ENCODE measurements at regions of chr11 and their contacts with region 1.

Region 1: GRCh38 chr11:59053387-59053786 is 32.7 kb upstream of the GLYATL1B start:
- DNase-seq: peak; percentile 59
- H3K4me3 ChIP-seq: no peak overlapping the region
- H3K27ac ChIP-seq: no peak overlapping the region
- H3K4me1 ChIP-seq: no peaks in the 10 kb centered on the region
- H3K27me3 ChIP-seq: peaks cover 2 to 4% of the 10 kb centered on the region in 2 experiments
- CTCF ChIP-seq: peak; percentile 69 to 74
- POLR2A ChIP-seq: no peak

Region 2: GRCh38 chr11:58301576-58301975 is 751.8 kb before region 1 on chr11:
- CTCF ChIA-PET with region 1: no interaction called
- POLR2A ChIA-PET with region 1: no interaction called
- dilution Hi-C with region 1: no loop called
- intact Hi-C with region 1: no loop called
- DNase-seq: no peak
- H3K4me3 ChIP-seq: no peak overlapping the region
- H3K27ac ChIP-seq: no peak overlapping the region
- H3K4me1 ChIP-seq: no peaks in the 10 kb centered on the region
- H3K27me3 ChIP-seq: no peaks in the 10 kb centered on the region
- CTCF ChIP-seq: no peak
- POLR2A ChIP-seq: no peak

Region 3: GRCh38 chr11:58958500-58958899 is 94.9 kb before region 1 on chr11:
- CTCF ChIA-PET with region 1: no interaction called
- POLR2A ChIA-PET with region 1: no interaction called
- dilution Hi-C with region 1: no loop called
- intact Hi-C with region 1: loop called (anchors 1 kb)
- DNase-seq: peak; percentile 9
- H3K4me3 ChIP-seq: no peak overlapping the region
- H3K27ac ChIP-seq: no peak overlapping the region
- H3K4me1 ChIP-seq: no peaks in the 10 kb centered on the region
- H3K27me3 ChIP-seq: peaks cover 0 to 4% of the 10 kb centered on the region in 2 experiments
- CTCF ChIP-seq: peak in 1 of 2 donors; percentile 31
- POLR2A ChIP-seq: no peak

Region 4: GRCh38 chr11:59076876-59077571 is 23.6 kb after region 1 on chr11:
- CTCF ChIA-PET with region 1: interaction called, 11 read pairs
- POLR2A ChIA-PET with region 1: no interaction called
- dilution Hi-C with region 1: no loop called
- intact Hi-C with region 1: no loop called
- DNase-seq: no peak
- H3K4me3 ChIP-seq: no peak overlapping the region
- H3K27ac ChIP-seq: no peak overlapping the region
- H3K4me1 ChIP-seq: no peaks in the 10 kb centered on the region
- H3K27me3 ChIP-seq: peaks cover 0 to 2% of the 10 kb centered on the region in 2 experiments
- CTCF ChIP-seq: no peak
- POLR2A ChIP-seq: no peak

Measured in endothelial cell of umbilical vein (primary cell).